Sigmoid colon (tissue), 7 donors: ENCODE measurements at regions of chr6 and their contacts with region 1.

Region 1: GRCh38 chr6:32642720-32643106 is 5.5 kb downstream of the HLA-DQA1 start:
- DNase-seq: no peak
- H3K4me3 ChIP-seq: no peak overlapping the region
- H3K27ac ChIP-seq: no peak overlapping the region
- H3K4me1 ChIP-seq: no peaks in the 10 kb centered on the region
- H3K27me3 ChIP-seq: no peaks in the 10 kb centered on the region
- CTCF ChIP-seq: no peak
- EP300 ChIP-seq: no peak
- POLR2A ChIP-seq: no peak

Region 2: DNA sequence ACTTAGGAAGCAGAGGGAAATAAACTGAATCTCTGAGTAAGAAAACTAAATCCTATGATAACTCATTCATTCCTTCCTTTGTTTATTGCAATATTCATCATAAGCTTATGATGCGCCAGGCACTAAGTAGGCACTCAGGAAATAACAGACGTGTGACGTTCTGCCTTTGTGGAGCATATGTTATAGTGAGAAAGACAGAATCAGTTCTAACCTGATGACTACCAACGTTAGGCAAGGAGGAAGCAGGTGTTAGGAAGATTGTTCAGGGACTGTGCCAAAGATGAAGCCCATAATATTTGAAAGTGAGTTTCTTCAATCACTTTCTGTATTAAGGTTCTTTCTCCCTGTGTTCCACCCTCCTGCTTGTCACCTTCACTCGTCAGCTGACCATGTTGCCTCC is 102.1 kb after region 1 on chr6:
- intact Hi-C with region 1: loop called (anchors 5 kb)
- DNase-seq: no peak
- H3K4me3 ChIP-seq: no peak overlapping the region
- H3K27ac ChIP-seq: no peak overlapping the region
- H3K4me1 ChIP-seq: no peaks in the 10 kb centered on the region
- H3K27me3 ChIP-seq: peaks cover 0 to 1% (median 0%) of the 10 kb centered on the region in 3 donors
- CTCF ChIP-seq: no peak
- EP300 ChIP-seq: no peak
- POLR2A ChIP-seq: no peak